CD8-positive, alpha-beta T cell (primary cell): ENCODE measurements at regions of chrX and their contacts with region 1.

Region 1: DNA sequence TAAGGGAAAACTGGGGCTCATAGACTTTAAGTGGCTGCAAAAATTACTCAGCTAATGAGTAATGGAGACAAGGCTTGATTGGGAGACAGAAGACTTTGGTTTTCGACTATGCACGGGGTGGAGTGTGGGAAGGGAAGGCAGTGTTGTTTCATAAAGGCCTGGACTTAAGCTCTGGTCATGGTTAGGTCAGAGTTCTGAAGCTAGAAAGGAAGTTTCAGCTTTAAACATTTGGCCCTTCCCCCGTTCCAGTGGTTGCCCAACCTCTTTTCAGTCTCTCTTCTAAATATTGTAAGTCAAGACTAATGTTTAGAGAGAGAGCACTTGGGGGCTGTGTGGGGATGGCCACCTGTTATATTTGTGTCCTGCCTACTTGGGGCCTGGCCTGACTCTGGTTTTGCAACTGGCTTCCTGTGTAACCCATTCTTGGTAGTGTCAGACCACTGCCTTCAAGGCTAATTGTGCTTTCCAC is 21.0 kb downstream of the MSN start:
- DNase-seq: no peak
- ATAC-seq: no peak
- H3K4me3 ChIP-seq: peak overlapping the region in 1 of 2 experiments; percentile 23
- H3K4me3 Mint-ChIP-seq: peak overlapping the region; percentile 65
- H3K27ac ChIP-seq: peak overlapping the region in 1 of 2 experiments; percentile 69
- H3K27ac Mint-ChIP-seq: peak overlapping the region; percentile 97
- H3K4me1 ChIP-seq: peaks cover 90% of the 10 kb centered on the region
- H3K4me1 Mint-ChIP-seq: peaks cover 84% of the 10 kb centered on the region
- H3K27me3 ChIP-seq: no peaks in the 10 kb centered on the region
- H3K27me3 Mint-ChIP-seq: no peaks in the 10 kb centered on the region
- CTCF ChIP-seq: no peak

Region 2: GRCh38 chrX:65723706-65724105 is 35.3 kb after region 1 on chrX:
- CTCF ChIA-PET with region 1: no interaction called
- POLR2A ChIA-PET with region 1: no interaction called
- intact Hi-C with region 1: loop called in 1 of 2 experiments (anchors 5 kb)
- DNase-seq: peak in 5 of 9 experiments; percentile 13 to 81 (median 53)
- ATAC-seq: peak; percentile 68
- H3K4me3 ChIP-seq: no peak overlapping the region
- H3K4me3 Mint-ChIP-seq: peak overlapping the region; percentile 45
- H3K27ac ChIP-seq: peak overlapping the region; percentile 58 to 83
- H3K27ac Mint-ChIP-seq: peak overlapping the region; percentile 91
- H3K4me1 ChIP-seq: peaks cover 86% of the 10 kb centered on the region
- H3K4me1 Mint-ChIP-seq: peaks cover 84% of the 10 kb centered on the region
- H3K27me3 ChIP-seq: no peaks in the 10 kb centered on the region
- H3K27me3 Mint-ChIP-seq: no peaks in the 10 kb centered on the region
- CTCF ChIP-seq: no peak